Aorta (tissue), 5 donors: ENCODE measurements at regions of chr12 and their contacts with region 1.

Region 1: GRCh38 chr12:47686645-47687240 is 19.1 kb downstream of the RPAP3 start:
- DNase-seq: no peak
- ATAC-seq: no peak
- H3K4me3 ChIP-seq: no peak overlapping the region
- H3K27ac ChIP-seq: no peak overlapping the region
- H3K4me1 ChIP-seq: no peaks in the 10 kb centered on the region
- H3K27me3 ChIP-seq: no peaks in the 10 kb centered on the region

Region 2: DNA sequence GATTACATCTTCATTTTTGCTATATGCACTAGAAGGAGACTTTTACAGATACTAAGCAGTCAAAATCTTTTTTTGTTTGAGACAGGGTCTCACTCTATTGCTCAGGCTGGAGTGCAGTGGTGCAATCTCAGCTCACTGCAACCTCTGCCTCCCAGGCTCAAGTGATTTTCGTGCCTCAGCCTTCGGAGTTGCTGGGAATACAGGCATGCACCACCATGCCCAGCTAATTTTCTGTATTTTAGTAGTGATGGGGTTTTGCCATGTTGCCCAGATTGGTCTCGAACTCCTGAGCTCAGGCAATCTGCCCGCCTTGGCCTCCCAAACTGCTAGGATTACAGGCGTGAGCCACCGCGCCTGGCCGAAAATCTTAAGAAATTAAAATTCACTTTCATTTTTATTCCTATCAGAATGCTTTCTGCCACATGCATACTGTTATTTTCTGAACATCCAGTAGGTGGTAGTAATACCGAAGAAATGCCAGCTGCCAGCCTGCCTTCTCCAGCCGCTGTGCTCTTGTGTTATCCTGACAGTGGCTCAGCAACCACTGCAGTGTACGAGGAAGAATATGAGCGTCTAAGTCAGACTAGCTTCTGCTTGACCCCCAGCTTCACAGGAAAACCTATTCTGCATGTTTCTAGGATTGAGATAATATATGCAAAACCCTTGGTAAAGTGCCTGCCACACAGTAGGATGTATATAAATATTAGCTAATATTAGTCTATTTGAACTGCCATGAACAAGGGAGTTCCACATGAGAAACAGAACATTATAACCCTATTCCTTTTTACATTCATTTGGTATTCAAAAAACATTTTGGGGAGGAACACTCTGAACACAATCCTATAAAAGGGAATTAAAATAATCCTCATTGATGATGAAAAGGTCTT is 35.1 kb before region 1 on chr12:
- intact Hi-C with region 1: loop called (anchors 5 kb)
- DNase-seq: peak; percentile 75 to 78
- ATAC-seq: peak; percentile 87
- H3K4me3 ChIP-seq: no peak overlapping the region
- H3K27ac ChIP-seq: no peak overlapping the region
- H3K4me1 ChIP-seq: peaks cover 0 to 3% of the 10 kb centered on the region in 2 donors
- H3K27me3 ChIP-seq: no peaks in the 10 kb centered on the region